ENCODE measurements at regions of chr11 and their contacts with region 1.

Region 1: DNA sequence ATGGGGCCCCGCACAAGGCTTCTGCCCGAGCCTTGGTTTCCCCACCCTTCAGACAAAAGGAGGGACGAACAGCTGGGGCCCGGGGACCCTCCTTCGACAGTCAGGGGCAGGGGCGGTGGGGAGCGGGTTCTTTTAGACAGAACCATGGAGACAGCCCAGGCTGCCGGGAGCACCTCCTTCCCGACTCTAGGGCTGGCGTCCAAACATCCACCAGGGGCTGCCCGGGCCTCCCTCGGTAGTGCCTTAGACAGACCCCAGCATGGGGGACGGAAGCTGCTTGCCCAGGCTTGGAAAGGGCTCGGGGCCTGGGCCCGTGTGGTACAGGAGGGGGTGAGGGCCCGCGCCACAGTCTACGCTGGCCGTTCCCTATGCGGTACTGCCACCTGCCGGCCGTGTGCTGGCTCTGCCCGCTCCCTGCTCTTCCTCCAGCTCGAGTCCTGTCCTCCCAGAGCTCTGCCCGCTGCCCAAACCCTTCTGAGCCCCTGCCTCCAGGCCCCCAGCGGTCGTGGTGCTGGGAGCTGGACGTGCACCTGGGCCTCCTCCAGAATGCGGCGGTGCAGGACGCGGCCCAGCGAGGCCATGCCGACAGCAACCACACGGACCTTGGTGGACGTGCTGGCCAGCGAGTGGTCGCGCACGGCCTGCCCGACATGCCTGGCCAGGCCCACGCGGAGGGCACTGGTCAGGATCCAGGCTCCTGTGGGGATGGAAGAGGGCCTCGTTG is 20.1 kb downstream of the TSSC4 start:
- DNase-seq: peak; percentile 72
- H3K27ac ChIP-seq: no peak overlapping the region
- CTCF ChIP-seq: peak; percentile 89

Region 2: GRCh38 chr11:2298795-2299761 is 121.6 kb before region 1 on chr11:
- CTCF ChIA-PET with region 1: interaction called, 161 read pairs
- POLR2A ChIA-PET with region 1: no interaction called
- DNase-seq: peak; percentile 57
- H3K27ac ChIP-seq: no peak overlapping the region
- CTCF ChIP-seq: peak; percentile 31

Region 3: GRCh38 chr11:2312232-2313042 is 108.2 kb before region 1 on chr11:
- CTCF ChIA-PET with region 1: interaction called, 161 read pairs
- POLR2A ChIA-PET with region 1: no interaction called
- DNase-seq: no peak
- H3K27ac ChIP-seq: no peak overlapping the region
- CTCF ChIP-seq: no peak

Region 4: GRCh38 chr11:2409611-2410468 is 10.8 kb before region 1 on chr11:
- CTCF ChIA-PET with region 1: interaction called, 50 read pairs
- POLR2A ChIA-PET with region 1: no interaction called
- DNase-seq: no peak
- H3K27ac ChIP-seq: no peak overlapping the region
- CTCF ChIP-seq: no peak

Region 5: GRCh38 chr11:2489083-2489482 is 68.4 kb after region 1 on chr11:
- CTCF ChIA-PET with region 1: no interaction called
- POLR2A ChIA-PET with region 1: no interaction called
- DNase-seq: no peak
- H3K27ac ChIP-seq: no peak overlapping the region
- CTCF ChIP-seq: no peak

Measured in RWPE1 (cell line).